Activated CD4-positive, alpha-beta memory T cell treated with anti-CD3 and anti-CD28 coated beads for 36 hours (primary cell): ENCODE measurements at regions of chr21 and their contacts with region 1.

Region 1: DNA sequence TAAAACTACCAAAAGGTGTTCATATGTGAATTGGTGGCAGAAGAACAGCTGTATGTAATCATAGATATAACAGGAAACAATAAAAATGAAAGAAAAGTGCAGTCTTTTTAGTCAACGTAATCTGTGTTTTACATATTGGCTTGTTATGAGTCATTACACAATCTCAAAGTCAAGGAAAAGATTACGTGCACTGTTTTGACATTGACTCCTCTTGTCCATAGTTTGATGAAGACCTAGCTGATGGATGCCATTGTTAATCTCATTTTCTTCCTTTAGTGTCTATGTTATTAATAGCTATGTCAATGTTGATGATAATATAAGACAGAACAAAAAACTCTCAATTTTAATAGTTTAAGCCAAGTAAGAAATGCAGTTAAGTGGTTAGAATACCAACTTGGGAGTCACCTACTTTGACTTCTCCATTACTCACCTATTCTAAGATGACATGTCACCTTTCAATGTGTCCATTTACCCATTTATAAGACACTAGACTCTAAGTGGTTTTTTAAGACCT is 84.5 kb upstream of the SAMSN1 start:
- DNase-seq: no peak
- H3K4me3 Mint-ChIP-seq: no peak overlapping the region
- H3K27ac Mint-ChIP-seq: peak overlapping the region; percentile 70
- H3K4me1 Mint-ChIP-seq: peaks cover 27% of the 10 kb centered on the region
- H3K27me3 Mint-ChIP-seq: no peaks in the 10 kb centered on the region

Region 2: GRCh38 chr21:14454016-14455009 is 176.3 kb before region 1 on chr21:
- CTCF ChIA-PET with region 1: no interaction called
- POLR2A ChIA-PET with region 1: no interaction called
- intact Hi-C with region 1: loop called (anchors 2 kb)
- DNase-seq: no peak
- H3K4me3 Mint-ChIP-seq: no peak overlapping the region
- H3K27ac Mint-ChIP-seq: peak overlapping the region; percentile 74
- H3K4me1 Mint-ChIP-seq: peaks cover 42% of the 10 kb centered on the region
- H3K27me3 Mint-ChIP-seq: no peaks in the 10 kb centered on the region

Region 3: DNA sequence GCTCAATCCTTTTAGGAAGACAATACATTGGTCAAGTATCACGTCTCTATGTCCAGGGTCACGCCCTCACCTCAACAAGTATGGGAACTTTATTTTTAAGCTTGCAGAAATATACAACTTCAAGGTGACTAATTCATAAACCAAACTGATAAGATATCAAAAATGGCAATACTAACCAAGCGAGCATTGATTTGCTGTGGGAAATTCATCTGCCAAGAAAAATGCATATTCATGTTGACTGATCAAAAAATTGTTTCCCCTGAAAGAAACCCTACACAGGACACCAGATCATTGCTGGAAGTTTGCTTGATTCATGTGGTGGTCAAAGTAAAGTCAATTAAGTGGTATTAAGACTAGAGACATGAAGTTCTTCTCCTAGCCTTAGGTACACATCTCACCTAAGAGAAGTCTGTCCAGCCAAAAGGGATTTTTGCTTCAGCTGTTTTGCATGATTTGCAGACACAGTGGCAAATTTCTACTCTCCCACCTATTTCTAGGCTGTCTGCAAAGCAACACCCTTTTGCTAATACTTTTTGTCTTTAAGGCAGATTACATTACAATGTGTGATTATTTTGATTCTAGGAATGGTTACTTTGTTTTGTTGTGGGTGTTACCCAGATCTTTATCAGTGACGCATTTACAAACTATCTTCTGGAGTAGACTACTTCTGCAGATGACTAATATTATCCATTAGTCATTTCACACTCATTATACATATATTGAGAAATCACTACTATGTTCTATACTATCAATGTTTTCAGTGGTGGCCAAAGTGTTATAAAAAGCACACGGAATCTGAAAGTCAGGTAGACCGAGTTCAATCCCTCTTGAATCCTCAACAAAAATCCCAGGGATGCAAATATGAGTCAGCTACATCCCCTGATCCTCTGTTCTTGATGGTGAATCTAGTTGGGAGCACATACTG is 96.8 kb before region 1 on chr21:
- CTCF ChIA-PET with region 1: no interaction called
- POLR2A ChIA-PET with region 1: no interaction called
- intact Hi-C with region 1: loop called (anchors 1 kb)
- DNase-seq: peak; percentile 29
- H3K4me3 Mint-ChIP-seq: peak overlapping the region; percentile 95
- H3K27ac Mint-ChIP-seq: peak overlapping the region; percentile 100
- H3K4me1 Mint-ChIP-seq: peaks cover 82% of the 10 kb centered on the region
- H3K27me3 Mint-ChIP-seq: peaks cover 2% of the 10 kb centered on the region

Region 4: GRCh38 chr21:14602382-14602958 is 28.1 kb before region 1 on chr21:
- CTCF ChIA-PET with region 1: no interaction called
- POLR2A ChIA-PET with region 1: no interaction called
- intact Hi-C with region 1: loop called (anchors 2 kb)
- DNase-seq: no peak
- H3K4me3 Mint-ChIP-seq: peak overlapping the region; percentile 6
- H3K27ac Mint-ChIP-seq: no peak overlapping the region
- H3K4me1 Mint-ChIP-seq: peaks cover 19% of the 10 kb centered on the region
- H3K27me3 Mint-ChIP-seq: no peaks in the 10 kb centered on the region

Region 5: GRCh38 chr21:14737922-14738321 is 107.3 kb after region 1 on chr21:
- CTCF ChIA-PET with region 1: interaction called, 10 read pairs
- POLR2A ChIA-PET with region 1: no interaction called
- intact Hi-C with region 1: no loop called
- DNase-seq: peak; percentile 38
- H3K4me3 Mint-ChIP-seq: no peak overlapping the region
- H3K27ac Mint-ChIP-seq: no peak overlapping the region
- H3K4me1 Mint-ChIP-seq: peaks cover 31% of the 10 kb centered on the region
- H3K27me3 Mint-ChIP-seq: no peaks in the 10 kb centered on the region

Region 6: DNA sequence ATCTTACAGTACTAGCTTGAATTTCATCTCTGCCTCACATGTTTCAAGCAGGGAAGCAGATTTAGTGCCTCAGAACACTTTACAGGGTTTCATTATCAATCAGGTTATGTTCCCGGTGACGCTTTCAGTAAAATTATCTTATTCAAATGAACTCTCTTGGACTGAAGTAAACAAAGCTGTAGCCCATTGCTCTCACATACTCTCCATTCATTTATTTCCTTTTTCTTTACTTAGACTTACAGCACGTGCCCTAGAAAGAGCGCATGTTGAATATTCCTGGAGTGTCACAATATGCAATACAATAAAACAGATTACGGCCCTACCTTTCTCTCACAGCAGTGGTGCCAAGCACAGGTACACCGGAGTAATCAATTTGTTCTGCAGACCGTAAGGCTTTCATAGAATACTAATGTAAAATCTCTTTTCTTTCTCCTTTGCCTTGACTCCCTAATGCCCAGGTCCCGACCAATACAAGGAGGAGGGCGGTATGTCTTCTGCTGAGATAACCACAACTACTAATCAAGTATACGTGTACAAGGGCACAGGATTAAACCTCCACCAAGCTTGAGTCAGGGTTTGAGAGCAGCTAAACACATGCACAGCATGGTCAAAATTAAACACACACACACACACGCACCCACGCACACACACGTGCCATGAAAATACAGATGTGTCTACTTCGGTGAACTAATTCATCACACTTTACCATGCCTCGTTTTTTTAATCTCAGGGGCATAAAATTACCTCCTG is 371.4 kb after region 1 on chr21:
- CTCF ChIA-PET with region 1: no interaction called
- POLR2A ChIA-PET with region 1: no interaction called
- intact Hi-C with region 1: no loop called
- DNase-seq: no peak
- H3K4me3 Mint-ChIP-seq: no peak overlapping the region
- H3K27ac Mint-ChIP-seq: no peak overlapping the region
- H3K4me1 Mint-ChIP-seq: peaks cover 40% of the 10 kb centered on the region
- H3K27me3 Mint-ChIP-seq: no peaks in the 10 kb centered on the region